Dendritic cell treated with granulocyte-macrophage colony-stimulating factor and Interleukin-4, amounts not matched to agents 40 ng/mL and 50 ng/mL, for 4 days (primary cell): ENCODE measurements at regions of chr2 and their contacts with region 1.

Region 1: DNA sequence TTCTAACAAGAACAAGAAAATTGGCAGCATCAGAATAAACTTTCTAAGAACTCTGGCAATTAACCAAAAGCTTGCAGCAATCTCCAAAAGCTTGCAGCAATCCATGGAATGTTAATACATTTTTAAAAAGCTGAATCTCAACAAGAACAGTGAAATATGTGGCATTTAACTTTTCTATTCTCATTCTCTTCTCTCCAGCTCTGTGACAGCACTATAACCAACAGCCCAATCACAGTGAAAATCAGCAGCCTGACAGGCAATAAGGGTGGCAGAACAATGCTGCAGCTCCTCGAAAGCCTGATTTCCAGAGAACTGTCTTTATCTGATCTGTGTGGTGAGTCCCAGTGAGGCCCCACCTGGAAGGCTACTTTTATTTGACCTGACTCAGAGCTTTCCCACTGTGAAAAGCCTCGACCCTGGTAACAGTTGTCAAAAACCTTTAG is 60.0 kb downstream of the TMEM131 start:
- H3K4me3 Mint-ChIP-seq: no peak overlapping the region
- H3K27ac Mint-ChIP-seq: no peak overlapping the region
- H3K4me1 Mint-ChIP-seq: peaks cover 76% of the 10 kb centered on the region
- H3K27me3 Mint-ChIP-seq: no peaks in the 10 kb centered on the region

Region 2: GRCh38 chr2:97900806-97901205 is 34.9 kb before region 1 on chr2:
- intact Hi-C with region 1: loop called (anchors 5 kb)
- H3K4me3 Mint-ChIP-seq: no peak overlapping the region
- H3K27ac Mint-ChIP-seq: no peak overlapping the region
- H3K4me1 Mint-ChIP-seq: peaks cover 17% of the 10 kb centered on the region
- H3K27me3 Mint-ChIP-seq: no peaks in the 10 kb centered on the region

Region 3: DNA sequence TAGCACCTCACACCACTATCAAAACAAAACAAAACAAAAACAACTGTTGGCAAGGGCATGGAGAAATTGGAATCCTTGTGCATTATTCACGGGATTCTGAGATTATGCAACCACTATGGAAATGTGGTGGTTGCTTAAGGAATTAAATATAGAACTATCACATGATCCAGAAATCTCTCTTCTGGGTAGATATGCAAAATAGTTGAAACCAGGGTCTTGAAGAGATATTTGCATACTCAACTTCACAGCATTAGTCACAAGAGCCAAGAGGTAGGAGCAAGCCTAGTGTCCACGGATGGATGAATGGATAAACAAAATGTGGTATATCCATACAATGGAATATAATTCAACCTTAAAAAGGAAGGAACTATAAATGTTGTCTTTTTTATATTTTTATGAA is 53.0 kb after region 1 on chr2:
- intact Hi-C with region 1: loop called (anchors 10 kb)
- H3K4me3 Mint-ChIP-seq: no peak overlapping the region
- H3K27ac Mint-ChIP-seq: no peak overlapping the region
- H3K4me1 Mint-ChIP-seq: peaks cover 50% of the 10 kb centered on the region
- H3K27me3 Mint-ChIP-seq: no peaks in the 10 kb centered on the region